Dendritic cell treated with granulocyte-macrophage colony-stimulating factor and Interleukin-4, amounts not matched to agents 40 ng/mL and 50 ng/mL, for 4 days (primary cell): ENCODE measurements at regions of chr22 and their contacts with region 1.

Region 1: GRCh38 chr22:27880778-27881394 is 38.2 kb downstream of the PITPNB start:
- H3K4me3 Mint-ChIP-seq: no peak overlapping the region
- H3K27ac Mint-ChIP-seq: no peak overlapping the region
- H3K4me1 Mint-ChIP-seq: peaks cover 7% of the 10 kb centered on the region
- H3K27me3 Mint-ChIP-seq: no peaks in the 10 kb centered on the region

Region 2: DNA sequence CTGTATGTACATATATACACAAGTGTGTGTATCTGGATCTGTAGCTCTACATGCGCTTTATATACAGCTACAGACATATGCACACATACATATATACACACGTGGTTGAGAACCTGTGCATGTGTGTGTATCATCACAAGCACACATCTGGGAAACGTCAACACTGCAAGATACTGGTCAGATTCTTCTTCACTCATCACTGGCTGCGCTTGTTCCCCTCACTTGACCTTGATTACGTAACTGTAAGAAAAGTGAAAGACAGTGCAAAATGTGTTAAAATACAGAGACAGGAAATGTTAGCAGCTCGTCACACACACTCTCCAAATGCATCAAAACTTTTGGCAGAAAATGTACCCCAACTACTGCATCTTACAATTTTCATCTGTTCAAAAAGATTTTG is 27.5 kb before region 1 on chr22:
- intact Hi-C with region 1: no loop called
- H3K4me3 Mint-ChIP-seq: no peak overlapping the region
- H3K27ac Mint-ChIP-seq: no peak overlapping the region
- H3K4me1 Mint-ChIP-seq: no peaks in the 10 kb centered on the region
- H3K27me3 Mint-ChIP-seq: no peaks in the 10 kb centered on the region

Region 3: GRCh38 chr22:28009272-28009827 is 128.5 kb after region 1 on chr22:
- intact Hi-C with region 1: loop called (anchors 1 kb)
- H3K4me3 Mint-ChIP-seq: no peak overlapping the region
- H3K27ac Mint-ChIP-seq: no peak overlapping the region
- H3K4me1 Mint-ChIP-seq: no peaks in the 10 kb centered on the region
- H3K27me3 Mint-ChIP-seq: no peaks in the 10 kb centered on the region